WTC11 (cell line): ENCODE measurements at regions of chr22 and their contacts with region 1.

Region 1: DNA sequence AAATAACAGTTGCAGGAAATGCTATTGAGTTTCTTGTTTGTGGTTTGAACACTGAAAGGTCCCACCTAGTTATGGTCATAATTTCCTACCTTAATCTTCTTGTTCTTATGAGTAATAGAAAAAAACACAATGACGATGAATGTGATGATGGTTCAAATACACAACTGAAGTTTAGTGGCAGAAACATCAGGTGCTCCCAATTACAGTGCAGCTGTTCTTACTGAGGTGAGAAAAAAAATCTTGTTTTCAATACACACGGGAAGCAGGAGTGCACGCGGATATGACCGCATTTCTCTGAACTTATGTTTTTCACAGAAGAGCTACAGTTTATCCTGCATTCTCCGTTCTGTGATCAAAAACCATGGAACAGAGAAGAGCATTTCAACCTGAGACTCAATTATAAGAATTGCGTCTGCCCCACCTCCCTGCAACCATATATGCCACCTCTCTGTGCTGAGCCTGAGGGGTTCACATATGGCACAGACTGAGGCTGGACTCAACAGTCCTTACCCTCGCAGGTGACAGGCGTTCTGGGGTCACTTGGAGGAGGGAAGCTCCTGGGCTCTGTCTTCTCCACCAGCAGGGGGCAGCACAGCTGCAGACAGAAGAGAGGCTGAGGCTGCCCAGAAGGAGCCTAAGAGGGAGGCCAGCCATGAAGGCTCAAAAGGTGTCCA is 99.7 kb upstream of the IGLL5 start:
- DNase-seq: peak; percentile 82
- ATAC-seq: peak; percentile 90
- H3K4me3 Mint-ChIP-seq: no peak overlapping the region
- H3K27ac Mint-ChIP-seq: no peak overlapping the region
- H3K4me1 Mint-ChIP-seq: no peaks in the 10 kb centered on the region
- H3K27me3 Mint-ChIP-seq: peaks cover 88% of the 10 kb centered on the region
- CTCF ChIP-seq: peak; percentile 66; the same call in 1 of the 2 replicates

Region 2: GRCh38 chr22:22770280-22770871 is 17.5 kb before region 1 on chr22:
- CTCF ChIA-PET with region 1: interaction called, 125 read pairs
- POLR2A ChIA-PET with region 1: no interaction called
- DNase-seq: peak; percentile 84
- ATAC-seq: peak; percentile 88
- H3K4me3 Mint-ChIP-seq: no peak overlapping the region
- H3K27ac Mint-ChIP-seq: no peak overlapping the region
- H3K4me1 Mint-ChIP-seq: no peaks in the 10 kb centered on the region
- H3K27me3 Mint-ChIP-seq: peaks cover 99% of the 10 kb centered on the region
- CTCF ChIP-seq: peak; percentile 73; the same call in 1 of the 2 replicates

Region 3: DNA sequence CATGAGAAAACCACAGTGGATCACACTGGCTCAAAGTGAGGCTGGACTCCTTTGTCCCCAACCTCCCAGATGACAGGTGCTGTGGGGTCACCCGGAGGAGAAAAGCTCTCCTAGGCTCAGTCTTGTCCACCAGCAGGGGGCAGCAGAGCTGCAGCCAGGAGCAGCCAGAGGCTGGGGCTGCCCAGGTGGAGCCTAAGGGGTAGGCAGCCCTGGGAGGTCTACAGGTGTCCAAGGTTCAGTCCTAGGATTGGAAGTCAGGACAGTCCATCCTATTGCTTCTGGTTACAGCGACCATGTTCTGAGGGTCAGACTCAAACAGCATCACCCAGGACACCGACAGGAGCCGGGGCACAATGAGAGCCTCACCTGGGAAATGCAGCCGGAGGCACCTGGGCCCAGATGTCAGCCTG is 22.1 kb after region 1 on chr22:
- CTCF ChIA-PET with region 1: interaction called, 16 read pairs
- POLR2A ChIA-PET with region 1: no interaction called
- DNase-seq: peak; percentile 68
- ATAC-seq: peak; percentile 91
- H3K4me3 Mint-ChIP-seq: no peak overlapping the region
- H3K27ac Mint-ChIP-seq: no peak overlapping the region
- H3K4me1 Mint-ChIP-seq: no peaks in the 10 kb centered on the region
- H3K27me3 Mint-ChIP-seq: peaks cover 84% of the 10 kb centered on the region
- CTCF ChIP-seq: peak; percentile 66; the same call in 1 of the 2 replicates

Region 4: DNA sequence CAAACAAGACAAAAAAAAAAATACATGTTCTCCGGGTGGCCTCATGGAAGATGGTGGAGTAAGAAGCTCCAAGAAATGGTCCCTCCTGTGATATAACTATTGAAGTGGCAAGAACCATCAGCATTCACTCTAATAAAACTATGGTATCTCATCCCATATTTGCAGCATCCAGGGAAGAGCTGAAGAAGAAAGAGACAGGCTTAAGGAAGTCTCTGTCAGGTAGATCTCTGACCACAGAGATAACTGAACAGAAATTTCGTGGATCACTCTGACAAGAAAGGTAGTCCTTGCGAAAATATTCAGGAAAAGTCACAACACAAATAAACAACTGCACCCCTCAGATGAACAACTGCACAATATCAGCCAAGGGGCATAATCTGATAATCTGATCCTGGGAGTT is 45.1 kb after region 1 on chr22:
- CTCF ChIA-PET with region 1: no interaction called
- POLR2A ChIA-PET with region 1: no interaction called
- DNase-seq: no peak
- ATAC-seq: no peak
- H3K4me3 Mint-ChIP-seq: no peak overlapping the region
- H3K27ac Mint-ChIP-seq: no peak overlapping the region
- H3K4me1 Mint-ChIP-seq: no peaks in the 10 kb centered on the region
- H3K27me3 Mint-ChIP-seq: peaks cover 91% of the 10 kb centered on the region
- CTCF ChIP-seq: no peak

Region 5: DNA sequence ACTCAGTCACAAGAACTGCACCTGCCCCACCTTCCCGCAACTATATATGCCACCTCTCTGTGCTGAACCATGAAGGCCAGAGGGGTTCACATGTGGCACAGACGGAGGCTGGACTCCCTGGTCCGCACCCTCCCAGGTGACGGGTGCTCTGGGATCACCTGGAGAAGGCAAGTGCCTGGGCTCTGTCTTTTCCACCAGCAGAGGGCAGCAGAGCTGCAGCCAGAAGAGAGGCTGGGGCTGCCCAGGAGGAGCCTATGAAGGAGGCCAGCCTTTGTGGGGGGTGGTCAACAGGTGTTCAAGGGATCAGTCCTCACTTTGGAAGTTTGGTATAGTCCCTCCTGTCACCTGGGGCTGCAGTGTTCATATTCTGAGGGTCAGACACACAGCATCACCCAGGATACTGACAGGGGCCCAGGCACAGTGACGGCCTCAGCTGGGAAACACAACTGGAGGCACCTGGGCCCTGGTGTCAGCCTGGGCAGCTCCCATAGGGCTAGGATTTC is 60.5 kb after region 1 on chr22:
- CTCF ChIA-PET with region 1: interaction called, 21 read pairs
- POLR2A ChIA-PET with region 1: no interaction called
- DNase-seq: peak; percentile 90
- ATAC-seq: peak; percentile 98
- H3K4me3 Mint-ChIP-seq: no peak overlapping the region
- H3K27ac Mint-ChIP-seq: no peak overlapping the region
- H3K4me1 Mint-ChIP-seq: no peaks in the 10 kb centered on the region; the same call in 1 of the 2 replicates
- H3K27me3 Mint-ChIP-seq: peaks cover 83% of the 10 kb centered on the region
- CTCF ChIP-seq: peak; percentile 82

Region 6: GRCh38 chr22:22877523-22878210 is 89.7 kb after region 1 on chr22:
- CTCF ChIA-PET with region 1: interaction called, 94 read pairs
- POLR2A ChIA-PET with region 1: no interaction called
- DNase-seq: peak; percentile 85
- ATAC-seq: peak; percentile 83
- H3K4me3 Mint-ChIP-seq: no peak overlapping the region
- H3K27ac Mint-ChIP-seq: no peak overlapping the region
- H3K4me1 Mint-ChIP-seq: no peaks in the 10 kb centered on the region
- H3K27me3 Mint-ChIP-seq: peaks cover 79% of the 10 kb centered on the region
- CTCF ChIP-seq: peak; percentile 78